Caco-2 (cell line): ENCODE measurements at regions of chr19 and their contacts with region 1.

Region 1: DNA sequence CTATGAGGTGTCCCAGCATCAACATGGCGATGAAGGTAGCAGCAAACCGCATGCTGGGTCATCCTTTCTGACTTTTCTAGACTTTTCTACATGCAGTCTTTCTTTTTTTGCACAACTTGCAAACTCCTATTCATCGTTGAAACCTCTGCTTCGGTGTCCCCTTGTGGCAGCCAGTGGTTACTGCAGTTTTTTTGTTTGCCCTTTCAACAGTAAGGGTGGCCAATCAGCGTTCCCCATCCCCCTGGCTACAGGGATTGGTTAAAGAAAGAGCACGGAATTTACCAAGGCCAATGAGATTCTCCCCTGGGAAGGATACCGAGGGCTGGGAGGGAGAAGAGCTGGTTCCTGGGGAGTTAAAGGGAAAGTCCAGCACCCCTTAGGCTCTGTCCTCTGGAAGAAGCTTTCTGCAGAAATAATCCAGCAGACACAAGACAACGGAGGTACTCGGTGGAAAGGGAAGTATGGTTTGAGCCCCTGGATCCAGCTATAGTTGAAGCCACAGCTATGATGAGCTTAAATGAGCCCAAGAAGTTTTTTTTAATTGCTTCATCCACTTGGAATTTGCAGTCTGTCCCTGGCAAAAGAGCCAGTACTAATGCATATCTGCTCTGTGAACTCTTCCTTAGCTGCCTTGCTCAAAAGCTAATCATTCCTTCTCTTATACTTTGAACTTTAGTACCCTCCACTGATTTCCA is 5.6 kb upstream of the LSM4 start:
- DNase-seq: peak; percentile 92 to 94
- H3K4me3 ChIP-seq: peak overlapping the region; percentile 35
- H3K4me3 Mint-ChIP-seq: peak overlapping the region; percentile 71
- H3K27ac Mint-ChIP-seq: peak overlapping the region; percentile 74
- H3K4me1 ChIP-seq: peaks cover 7% of the 10 kb centered on the region; the same call in 1 of the 2 replicates
- H3K4me1 Mint-ChIP-seq: peaks cover 12% of the 10 kb centered on the region
- H3K27me3 ChIP-seq: no peaks in the 10 kb centered on the region
- H3K27me3 Mint-ChIP-seq: no peaks in the 10 kb centered on the region
- CTCF ChIP-seq: peak; percentile 84 to 85

Region 2: GRCh38 chr19:18192673-18193387 is 135.7 kb before region 1 on chr19 and contains the start of gene MPV17L2:
- CTCF ChIA-PET with region 1: interaction called, 6 read pairs
- POLR2A ChIA-PET with region 1: interaction called, 6 read pairs
- intact Hi-C with region 1: loop called (anchors 2 kb)
- DNase-seq: peak; percentile 98 to 99
- H3K4me3 ChIP-seq: peak within 1 kb of the TSS; percentile 77
- H3K4me3 Mint-ChIP-seq: peak within 1 kb of the TSS; percentile 76
- H3K27ac Mint-ChIP-seq: peak within 1 kb of the TSS; percentile 69
- H3K4me1 ChIP-seq: peaks cover 4% of the 10 kb centered on the region; the same call in 1 of the 2 replicates
- H3K4me1 Mint-ChIP-seq: no peaks in the 10 kb centered on the region
- H3K27me3 ChIP-seq: no peaks in the 10 kb centered on the region
- H3K27me3 Mint-ChIP-seq: no peaks in the 10 kb centered on the region
- CTCF ChIP-seq: no peak
- total RNA-seq, gene MPV17L2: 14.1 and 16.6 TPM in 2 replicates

Region 3: DNA sequence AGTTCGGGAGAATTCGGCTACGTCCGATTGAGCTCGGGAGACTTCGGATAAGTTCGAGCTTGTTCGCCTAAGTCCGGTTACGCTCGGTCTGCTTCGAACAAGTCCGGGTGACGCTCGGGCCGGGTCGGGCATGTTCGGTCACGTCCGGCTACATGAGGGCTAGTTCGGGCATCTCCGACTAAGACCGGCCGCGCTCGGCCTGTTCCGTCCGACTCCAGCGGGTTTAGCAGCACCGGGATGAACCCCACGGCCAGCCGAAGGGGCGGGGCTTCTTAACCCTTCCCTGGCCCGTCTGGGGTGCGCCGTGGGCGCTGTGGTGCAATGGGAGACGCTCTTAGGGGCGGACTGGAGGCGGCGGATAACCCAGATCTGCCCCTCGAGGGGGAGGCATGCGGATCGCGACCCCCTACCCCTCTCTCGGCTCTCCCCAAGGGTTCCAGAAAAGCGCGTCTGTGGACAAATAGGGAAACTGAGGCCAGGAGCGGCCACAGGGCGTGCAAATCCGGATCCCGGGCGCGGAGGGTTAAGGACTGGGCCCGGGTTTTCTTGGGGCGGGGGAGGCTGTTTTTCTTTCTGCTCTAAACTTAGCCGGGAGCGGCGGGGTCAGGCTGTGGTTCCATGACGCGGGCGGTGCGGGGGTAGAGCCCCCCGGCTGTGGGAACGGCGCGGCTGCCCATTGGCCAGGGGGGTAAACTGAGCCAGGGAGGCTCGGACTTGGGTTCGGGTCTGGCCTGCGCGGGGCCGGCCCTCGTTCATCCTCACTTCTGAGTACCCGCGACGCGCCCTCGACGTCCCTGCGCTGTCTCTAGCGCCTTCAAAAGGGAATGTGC is 103.7 kb before region 1 on chr19:
- CTCF ChIA-PET with region 1: interaction called, 12 read pairs
- POLR2A ChIA-PET with region 1: interaction called, 4 read pairs
- intact Hi-C with region 1: no loop called
- DNase-seq: peak; percentile 97 to 98
- H3K4me3 ChIP-seq: peak overlapping the region; percentile 79
- H3K4me3 Mint-ChIP-seq: peak overlapping the region; percentile 95
- H3K27ac Mint-ChIP-seq: peak overlapping the region; percentile 81
- H3K4me1 ChIP-seq: 0 out of 2 replicates have a peak, but pooled peaks cover 5% of the 10 kb centered on the region
- H3K4me1 Mint-ChIP-seq: peaks cover 10% of the 10 kb centered on the region
- H3K27me3 ChIP-seq: no peaks in the 10 kb centered on the region
- H3K27me3 Mint-ChIP-seq: no peaks in the 10 kb centered on the region
- CTCF ChIP-seq: no peak

Region 4: GRCh38 chr19:18291590-18292461 is 36.7 kb before region 1 on chr19:
- CTCF ChIA-PET with region 1: interaction called, 23 read pairs
- POLR2A ChIA-PET with region 1: interaction called, 22 read pairs
- intact Hi-C with region 1: loop called (anchors 2 kb)
- DNase-seq: peak; percentile 82 to 90
- H3K4me3 ChIP-seq: peak overlapping the region; percentile 63
- H3K4me3 Mint-ChIP-seq: peak overlapping the region; percentile 71
- H3K27ac Mint-ChIP-seq: peak overlapping the region; percentile 92
- H3K4me1 ChIP-seq: peaks cover 18% of the 10 kb centered on the region
- H3K4me1 Mint-ChIP-seq: peaks cover 7% of the 10 kb centered on the region
- H3K27me3 ChIP-seq: no peaks in the 10 kb centered on the region
- H3K27me3 Mint-ChIP-seq: no peaks in the 10 kb centered on the region
- CTCF ChIP-seq: no peak

Region 5: GRCh38 chr19:18419195-18419698 is 90.8 kb after region 1 on chr19 and contains the start of gene SSBP4:
- CTCF ChIA-PET with region 1: interaction called, 11 read pairs
- POLR2A ChIA-PET with region 1: no interaction called
- intact Hi-C with region 1: no loop called
- DNase-seq: peak; percentile 77 to 90
- H3K4me3 ChIP-seq: peak within 1 kb of the TSS; percentile 85
- H3K4me3 Mint-ChIP-seq: peak within 1 kb of the TSS; percentile 89
- H3K27ac Mint-ChIP-seq: peak within 1 kb of the TSS; percentile 24
- H3K4me1 ChIP-seq: peaks cover 41% of the 10 kb centered on the region
- H3K4me1 Mint-ChIP-seq: peaks cover 7% of the 10 kb centered on the region
- H3K27me3 ChIP-seq: no peaks in the 10 kb centered on the region
- H3K27me3 Mint-ChIP-seq: no peaks in the 10 kb centered on the region
- CTCF ChIP-seq: peak; percentile 22 to 39
- total RNA-seq, gene SSBP4: 46.2 and 49.4 TPM in 2 replicates